SK-N-SH (cell line): ENCODE measurements at regions of chr7 and their contacts with region 1.

Region 1: DNA sequence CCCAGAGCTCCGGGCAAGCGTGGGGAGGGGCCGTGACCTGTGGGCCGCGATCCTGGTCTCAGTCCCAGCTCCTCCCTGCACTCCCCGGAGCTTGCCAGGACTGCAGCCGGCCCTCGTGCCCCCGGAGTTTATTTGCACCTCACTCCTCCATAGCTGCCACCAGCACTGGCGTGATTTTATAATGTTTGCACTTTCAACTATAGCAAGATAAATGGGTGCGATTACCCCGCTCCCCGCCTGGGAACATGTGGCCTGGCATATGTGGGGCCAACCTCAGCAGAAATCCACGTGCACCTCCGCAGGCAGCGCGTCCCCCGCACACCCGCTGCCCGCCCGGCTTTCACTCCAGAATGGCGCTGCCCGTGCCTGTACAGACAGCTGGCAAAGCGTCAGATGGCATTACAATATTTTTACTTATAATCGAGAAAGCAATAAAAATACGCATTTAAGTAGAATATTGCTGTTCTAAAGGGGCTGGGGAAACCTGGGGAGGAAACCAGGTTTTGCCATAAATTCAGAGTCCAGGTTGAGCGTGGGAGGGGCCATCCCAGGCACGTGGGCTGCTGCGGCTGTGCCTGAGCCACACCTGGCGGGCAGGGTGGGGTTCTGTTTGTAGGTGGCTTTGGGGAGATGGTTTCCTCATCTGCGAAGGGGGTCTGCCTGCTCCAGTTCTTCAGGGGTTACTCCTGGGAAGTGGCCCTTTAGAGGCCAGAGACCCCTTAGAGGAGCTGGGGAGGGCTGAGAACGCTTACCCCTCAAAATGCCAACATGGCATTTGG is 31.0 kb downstream of the UNCX start:
- DNase-seq: no peak
- H3K4me3 ChIP-seq: no peak overlapping the region
- H3K27ac ChIP-seq: no peak overlapping the region
- H3K4me1 ChIP-seq: no peaks in the 10 kb centered on the region
- H3K27me3 ChIP-seq: peaks cover 97% of the 10 kb centered on the region
- CTCF ChIP-seq: no peak
- EP300 ChIP-seq: no peak
- RAD21 ChIP-seq: no peak

Region 2: GRCh38 chr7:1247527-1248059 is 16.1 kb before region 1 on chr7:
- CTCF ChIA-PET with region 1: interaction called, 12 read pairs
- POLR2A ChIA-PET with region 1: no interaction called
- DNase-seq: peak; percentile 76
- H3K4me3 ChIP-seq: no peak overlapping the region
- H3K27ac ChIP-seq: no peak overlapping the region
- H3K4me1 ChIP-seq: no peaks in the 10 kb centered on the region
- H3K27me3 ChIP-seq: peaks cover 95% of the 10 kb centered on the region
- CTCF ChIP-seq: no peak
- EP300 ChIP-seq: no peak
- RAD21 ChIP-seq: no peak